ENCODE measurements at regions of chr2 and their contacts with region 1.

Region 1: DNA sequence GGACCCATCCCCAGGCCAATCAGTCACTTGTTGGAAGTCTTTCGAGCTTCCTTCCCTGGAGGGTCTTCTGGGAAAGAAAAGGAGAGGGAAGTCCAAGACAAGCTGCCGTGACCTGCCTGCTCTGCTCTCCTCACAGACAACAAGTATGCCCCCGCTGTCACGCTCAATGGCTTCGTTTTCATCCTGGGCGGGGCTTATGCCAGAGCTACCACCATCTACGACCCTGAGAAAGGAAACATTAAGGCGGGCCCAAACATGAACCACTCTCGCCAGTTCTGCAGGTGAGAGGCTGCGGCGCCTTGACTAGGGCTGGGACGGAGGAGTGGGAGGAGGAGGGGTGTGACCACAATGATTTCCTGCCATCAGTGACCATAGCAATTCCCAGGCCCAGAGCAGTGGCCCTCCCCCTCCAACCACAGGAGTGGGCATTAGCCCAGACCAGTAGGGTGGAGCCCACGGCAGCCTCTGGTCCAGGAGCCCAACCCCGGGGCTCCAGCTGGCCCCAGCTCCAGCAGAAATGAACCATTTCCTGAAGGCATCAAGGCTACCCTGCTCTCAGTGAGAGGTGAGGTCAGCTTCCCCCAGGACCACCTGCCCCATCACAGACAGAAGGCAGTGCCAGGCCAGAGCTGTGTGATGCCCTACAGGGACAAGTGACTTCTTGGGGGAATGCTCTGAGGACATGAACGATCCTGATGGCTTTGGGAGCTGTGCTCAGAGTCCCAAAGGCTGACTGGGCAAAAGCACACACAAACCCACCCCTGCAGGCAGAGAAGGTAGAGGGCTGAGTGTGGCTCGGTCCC is 223.1 kb downstream of the ATAD2B start:
- DNase-seq: peak; percentile 70

Region 2: GRCh38 chr2:25286025-25286400 is 1582.2 kb after region 1 on chr2:
- intact Hi-C with region 1: loop called in 1 of 2 experiments (anchors 10 kb)
- DNase-seq: no peak

Measured in posterior vena cava (tissue), 2 donors.